CD4-positive, alpha-beta T cell (primary cell): ENCODE measurements at regions of chr9 and their contacts with region 1.

Region 1: GRCh38 chr9:38620483-38621433 is at the start of gene ANKRD18A:
- DNase-seq: peak; percentile 42 to 88 (median 66)
- ATAC-seq: peak; percentile 78
- H3K4me3 ChIP-seq: peak within 1 kb of the TSS; percentile 70
- H3K4me3 Mint-ChIP-seq: peak within 1 kb of the TSS; percentile 96
- H3K27ac ChIP-seq: peak within 1 kb of the TSS in 1 of 2 donors; percentile 13
- H3K27ac Mint-ChIP-seq: peak within 1 kb of the TSS; percentile 70
- H3K4me1 ChIP-seq: peaks cover 30% of the 10 kb centered on the region
- H3K4me1 Mint-ChIP-seq: peaks cover 12% of the 10 kb centered on the region
- H3K27me3 ChIP-seq: peaks cover 3 to 10% of the 10 kb centered on the region in 2 experiments
- H3K27me3 Mint-ChIP-seq: peaks cover 51% of the 10 kb centered on the region
- CTCF ChIP-seq: peak; percentile 45
- total RNA-seq, gene ANKRD18A: 7.2 to 7.8 TPM

Region 2: DNA sequence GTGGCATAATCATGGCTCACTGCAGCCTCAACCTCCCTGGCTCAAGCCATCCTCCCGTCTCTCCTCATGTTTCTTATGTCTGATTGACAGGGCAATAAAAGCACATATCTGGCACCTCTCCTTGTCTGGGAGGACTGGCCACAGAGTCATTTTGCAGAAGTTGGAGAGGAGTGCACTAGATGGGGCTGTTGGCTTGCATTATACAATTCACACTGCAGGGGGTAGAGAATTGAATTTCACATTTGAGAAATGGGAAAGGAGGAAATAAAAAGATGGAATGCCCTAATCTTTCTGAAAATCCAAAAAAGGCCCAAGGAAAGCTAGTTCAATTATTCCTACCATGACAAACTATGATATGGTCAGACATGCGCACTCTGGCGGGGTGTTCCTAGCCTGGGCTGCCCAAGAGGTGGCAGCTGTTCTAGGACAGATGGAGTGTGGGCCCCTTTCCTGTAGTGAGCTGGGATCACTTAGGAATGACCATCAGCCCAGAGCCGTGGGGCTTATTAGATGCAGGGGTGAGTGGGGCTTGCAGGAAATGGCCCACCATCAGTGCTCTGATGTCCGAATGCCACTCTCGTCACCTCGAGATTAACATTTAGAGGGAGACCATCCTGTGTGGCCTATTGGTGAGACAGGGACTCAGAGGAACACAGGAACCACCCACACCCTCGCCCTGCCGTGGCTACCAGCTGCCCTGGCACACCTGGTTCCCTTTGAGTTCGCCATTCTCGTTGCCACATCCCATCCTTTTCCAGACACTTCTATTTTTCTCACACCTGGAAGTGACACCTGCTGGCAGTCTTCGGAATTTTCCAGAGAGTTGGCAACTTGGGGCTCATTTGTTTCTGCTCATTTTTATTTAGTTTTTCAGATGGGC is 21.5 kb after region 1 on chr9:
- CTCF ChIA-PET with region 1: no interaction called
- POLR2A ChIA-PET with region 1: no interaction called
- intact Hi-C with region 1: loop called in 1 of 2 experiments (anchors 1 kb)
- DNase-seq: peak in 3 of 14 experiments; percentile 9 to 15 (median 13)
- ATAC-seq: no peak
- H3K4me3 ChIP-seq: no peak overlapping the region
- H3K4me3 Mint-ChIP-seq: no peak overlapping the region
- H3K27ac ChIP-seq: no peak overlapping the region
- H3K27ac Mint-ChIP-seq: no peak overlapping the region
- H3K4me1 ChIP-seq: no peaks in the 10 kb centered on the region
- H3K4me1 Mint-ChIP-seq: no peaks in the 10 kb centered on the region
- H3K27me3 ChIP-seq: peaks cover 0 to 4% of the 10 kb centered on the region in 2 experiments
- H3K27me3 Mint-ChIP-seq: peaks cover 20% of the 10 kb centered on the region
- CTCF ChIP-seq: peak; percentile 41

Region 3: DNA sequence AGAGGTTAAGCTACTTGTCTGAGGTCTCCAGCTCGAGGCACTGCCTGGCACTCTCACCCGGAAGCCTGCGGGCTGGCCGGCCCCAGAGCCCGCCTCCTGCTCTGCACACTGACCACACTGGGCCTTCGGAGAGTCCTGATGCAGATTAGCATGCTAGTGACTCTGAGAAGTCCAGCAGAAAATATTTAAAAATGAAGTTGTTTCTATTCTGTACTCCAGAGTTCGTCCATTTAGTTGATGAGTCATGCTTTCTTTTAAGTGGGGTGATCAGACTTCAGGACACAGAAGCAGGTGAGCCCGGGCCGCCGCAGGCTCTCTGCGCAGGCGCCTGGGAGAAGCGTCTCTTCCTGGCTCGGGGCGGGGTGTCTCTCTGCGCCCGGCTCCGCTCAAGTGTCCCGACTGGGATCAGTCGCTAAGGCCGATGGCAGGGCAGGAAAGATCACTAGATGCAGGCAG is 66.7 kb after region 1 on chr9:
- CTCF ChIA-PET with region 1: no interaction called
- POLR2A ChIA-PET with region 1: no interaction called
- intact Hi-C with region 1: no loop called
- DNase-seq: peak in 9 of 14 experiments; percentile 2 to 44 (median 33)
- ATAC-seq: no peak
- H3K4me3 ChIP-seq: peak overlapping the region; percentile 15
- H3K4me3 Mint-ChIP-seq: peak overlapping the region; percentile 27
- H3K27ac ChIP-seq: no peak overlapping the region
- H3K27ac Mint-ChIP-seq: no peak overlapping the region
- H3K4me1 ChIP-seq: no peaks in the 10 kb centered on the region
- H3K4me1 Mint-ChIP-seq: no peaks in the 10 kb centered on the region
- H3K27me3 ChIP-seq: no peaks in the 10 kb centered on the region
- H3K27me3 Mint-ChIP-seq: peaks cover 25% of the 10 kb centered on the region
- CTCF ChIP-seq: no peak